H1 (cell line): ENCODE measurements at regions of chr19 and their contacts with region 1.

Region 1: DNA sequence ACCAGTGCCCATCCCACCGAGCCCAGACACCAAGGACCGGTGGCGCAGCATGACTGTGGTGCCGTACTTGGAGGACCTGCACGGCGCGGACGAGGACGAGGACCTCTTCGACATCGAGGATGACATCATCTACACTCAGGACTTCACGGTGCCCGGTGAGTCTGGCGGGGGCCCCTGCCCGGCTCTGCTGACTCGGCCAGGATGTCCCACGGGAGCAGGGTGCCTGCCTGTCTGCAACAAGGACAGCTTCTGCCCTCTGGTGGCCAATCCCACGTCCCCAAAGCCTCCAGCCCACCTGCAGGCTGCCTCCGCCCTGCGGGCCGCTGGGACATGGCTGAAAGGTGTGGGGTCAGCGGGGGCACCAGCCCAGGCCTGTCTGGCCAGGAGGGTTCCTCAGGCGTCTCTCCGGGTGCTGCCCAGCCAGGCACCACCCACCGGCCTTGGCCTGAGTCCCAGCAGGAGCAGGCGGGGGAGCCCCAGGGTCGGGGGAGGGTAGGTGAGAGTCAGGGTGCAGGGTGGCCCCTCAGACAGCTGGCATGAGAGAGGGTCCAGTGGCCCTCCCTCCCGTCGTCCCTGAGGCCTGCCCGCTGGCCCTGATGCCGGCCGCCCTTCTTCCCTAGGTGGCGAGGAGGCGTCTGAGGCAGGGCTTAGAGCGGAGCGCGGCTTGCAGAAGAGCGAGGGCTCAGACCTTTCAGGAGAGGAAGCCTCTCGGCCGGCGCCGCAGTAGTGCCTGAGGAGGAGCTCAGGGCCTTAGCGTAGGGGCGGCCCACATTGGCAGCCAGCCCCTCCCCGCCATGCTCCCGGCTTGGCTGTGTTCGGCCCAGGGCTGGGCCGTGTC is 14.6 kb downstream of the CBARP start:
- DNase-seq: peak in 1 of 2 experiments; percentile 80
- H3K4me3 ChIP-seq: no peak overlapping the region
- H3K27ac ChIP-seq: no peak overlapping the region; the same call in 1 of the 2 replicates
- H3K4me1 ChIP-seq: no peaks in the 10 kb centered on the region; a peak in 1 of 7 replicates
- H3K27me3 ChIP-seq: no peaks in the 10 kb centered on the region
- CTCF ChIP-seq: peak; percentile 72 to 91 (median 79)
- EP300 ChIP-seq: no peak
- POLR2A ChIP-seq: no peak
- RAD21 ChIP-seq: peak; percentile 51 to 63

Region 2: GRCh38 chr19:1122972-1123363 is 100.3 kb before region 1 on chr19:
- CTCF ChIA-PET with region 1: interaction called, 14 read pairs
- POLR2A ChIA-PET with region 1: interaction called, 4 read pairs
- DNase-seq: peak in 1 of 2 experiments; percentile 100
- H3K4me3 ChIP-seq: no peak overlapping the region
- H3K27ac ChIP-seq: no peak overlapping the region; the same call in 1 of the 2 replicates
- H3K4me1 ChIP-seq: peaks cover 0 to 4% (median 2%) of the 10 kb centered on the region in 4 experiments; a peak in 3 of 7 replicates
- H3K27me3 ChIP-seq: no peaks in the 10 kb centered on the region
- CTCF ChIP-seq: no peak
- EP300 ChIP-seq: no peak
- POLR2A ChIP-seq: no peak
- RAD21 ChIP-seq: no peak

Region 3: GRCh38 chr19:1131738-1132551 is 91.3 kb before region 1 on chr19:
- CTCF ChIA-PET with region 1: interaction called, 24 read pairs
- POLR2A ChIA-PET with region 1: no interaction called
- DNase-seq: no peak
- H3K4me3 ChIP-seq: peak overlapping the region; percentile 11 to 52 (median 37); a peak in 7 of 8 replicates
- H3K27ac ChIP-seq: no peak overlapping the region; the same call in 1 of the 2 replicates
- H3K4me1 ChIP-seq: peaks cover 0 to 15% (median 7%) of the 10 kb centered on the region in 4 experiments; a peak in 6 of 7 replicates
- H3K27me3 ChIP-seq: no peaks in the 10 kb centered on the region
- CTCF ChIP-seq: no peak
- EP300 ChIP-seq: no peak
- POLR2A ChIP-seq: no peak
- RAD21 ChIP-seq: no peak

Region 4: DNA sequence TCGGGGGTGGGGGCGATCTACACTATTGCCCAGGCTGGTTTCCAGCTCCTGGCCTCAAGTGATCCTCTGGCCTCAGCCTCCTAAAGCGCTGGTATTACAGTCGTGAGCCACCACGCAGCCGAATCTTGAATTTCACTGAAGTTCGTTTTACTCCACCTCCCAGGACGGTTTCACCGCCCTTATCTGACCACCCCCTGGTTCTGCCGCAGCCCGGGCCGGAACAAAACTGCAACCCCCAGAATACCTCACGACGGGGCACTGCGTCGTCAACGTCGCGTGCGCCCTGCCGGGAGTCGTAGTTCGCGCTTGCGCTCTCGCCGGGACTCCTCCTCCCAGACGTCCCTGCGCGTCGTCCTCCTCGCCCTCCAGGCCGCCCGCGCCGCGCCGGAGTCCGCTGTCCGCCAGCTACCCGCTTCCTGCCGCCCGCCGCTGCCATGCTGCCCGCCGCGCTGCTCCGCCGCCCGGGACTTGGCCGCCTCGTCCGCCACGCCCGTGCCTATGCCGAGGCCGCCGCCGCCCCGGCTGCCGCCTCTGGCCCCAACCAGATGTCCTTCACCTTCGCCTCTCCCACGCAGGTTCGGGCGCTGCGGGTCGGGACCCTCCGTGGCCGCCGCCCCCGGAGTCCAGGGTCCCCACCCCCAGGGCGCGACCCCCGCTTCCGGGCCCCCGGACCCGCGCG is 18.3 kb after region 1 on chr19 and contains the start of gene ATP5F1D:
- CTCF ChIA-PET with region 1: interaction called, 56 read pairs
- POLR2A ChIA-PET with region 1: interaction called, 9 read pairs
- DNase-seq: peak in 1 of 2 experiments; percentile 94
- H3K4me3 ChIP-seq: peak within 1 kb of the TSS; percentile 65 to 95 (median 67)
- H3K27ac ChIP-seq: no peak within 1 kb of the TSS
- H3K4me1 ChIP-seq: peaks cover 0 to 26% (median 10%) of the 10 kb centered on the region in 4 experiments; a peak in 5 of 7 replicates
- H3K27me3 ChIP-seq: no peaks in the 10 kb centered on the region
- CTCF ChIP-seq: no peak
- EP300 ChIP-seq: no peak
- POLR2A ChIP-seq: no peak
- RAD21 ChIP-seq: no peak
- total RNA-seq, gene ATP5F1D: 174 and 182 TPM in 2 replicates

Region 5: DNA sequence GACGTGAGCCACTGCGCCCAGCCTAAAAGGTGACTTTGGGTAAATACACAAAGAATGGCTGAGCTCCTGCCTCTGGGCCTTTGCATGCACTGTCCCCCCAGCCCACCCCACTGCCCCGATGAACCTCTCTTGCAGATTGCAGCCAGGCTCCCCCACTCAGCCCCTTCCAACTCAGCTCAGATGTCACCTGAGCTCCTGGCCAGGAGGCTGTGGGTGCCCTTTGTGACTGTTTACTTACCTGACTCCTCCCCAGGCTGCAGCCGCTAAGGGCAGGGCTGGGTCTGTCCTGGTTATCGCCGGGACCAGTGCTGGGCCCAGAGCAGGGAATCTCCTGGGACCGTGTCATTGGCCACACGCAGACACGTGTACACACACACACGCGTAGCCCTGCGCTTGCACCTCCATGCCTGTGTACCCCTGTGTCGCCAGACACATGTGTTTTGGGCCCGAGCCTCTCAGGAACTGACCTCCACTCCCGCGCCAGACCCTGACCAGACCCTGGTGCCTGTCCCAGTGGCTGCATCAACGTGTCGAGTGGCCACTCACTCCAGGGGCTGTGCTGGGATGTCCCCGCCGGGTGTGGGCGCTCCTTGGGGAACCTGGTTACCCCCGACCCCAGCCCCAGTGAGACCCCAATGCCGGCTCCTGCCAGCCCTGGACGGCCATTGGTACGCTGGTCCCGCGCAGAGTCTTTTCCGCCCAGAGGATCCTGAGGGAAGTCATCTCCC is 81.1 kb after region 1 on chr19:
- CTCF ChIA-PET with region 1: no interaction called
- POLR2A ChIA-PET with region 1: no interaction called
- DNase-seq: no peak
- H3K4me3 ChIP-seq: no peak overlapping the region
- H3K27ac ChIP-seq: no peak overlapping the region
- H3K4me1 ChIP-seq: 0 out of 7 replicates have a peak, but pooled peaks cover 0 to 4% (median 0%) of the 10 kb centered on the region in 4 experiments
- H3K27me3 ChIP-seq: no peaks in the 10 kb centered on the region
- CTCF ChIP-seq: no peak
- EP300 ChIP-seq: no peak
- POLR2A ChIP-seq: no peak
- RAD21 ChIP-seq: no peak